WTC11 (cell line): ENCODE measurements at regions of chr12 and their contacts with region 1.

Region 1: GRCh38 chr12:6278439-6279255 is 31.8 kb upstream of the PLEKHG6 start:
- DNase-seq: peak; percentile 85
- ATAC-seq: peak; percentile 65
- H3K4me3 Mint-ChIP-seq: peak overlapping the region; percentile 76
- H3K27ac Mint-ChIP-seq: no peak overlapping the region
- H3K4me1 Mint-ChIP-seq: peaks cover 59% of the 10 kb centered on the region
- H3K27me3 Mint-ChIP-seq: peaks cover 5% of the 10 kb centered on the region
- CTCF ChIP-seq: peak; percentile 99

Region 2: DNA sequence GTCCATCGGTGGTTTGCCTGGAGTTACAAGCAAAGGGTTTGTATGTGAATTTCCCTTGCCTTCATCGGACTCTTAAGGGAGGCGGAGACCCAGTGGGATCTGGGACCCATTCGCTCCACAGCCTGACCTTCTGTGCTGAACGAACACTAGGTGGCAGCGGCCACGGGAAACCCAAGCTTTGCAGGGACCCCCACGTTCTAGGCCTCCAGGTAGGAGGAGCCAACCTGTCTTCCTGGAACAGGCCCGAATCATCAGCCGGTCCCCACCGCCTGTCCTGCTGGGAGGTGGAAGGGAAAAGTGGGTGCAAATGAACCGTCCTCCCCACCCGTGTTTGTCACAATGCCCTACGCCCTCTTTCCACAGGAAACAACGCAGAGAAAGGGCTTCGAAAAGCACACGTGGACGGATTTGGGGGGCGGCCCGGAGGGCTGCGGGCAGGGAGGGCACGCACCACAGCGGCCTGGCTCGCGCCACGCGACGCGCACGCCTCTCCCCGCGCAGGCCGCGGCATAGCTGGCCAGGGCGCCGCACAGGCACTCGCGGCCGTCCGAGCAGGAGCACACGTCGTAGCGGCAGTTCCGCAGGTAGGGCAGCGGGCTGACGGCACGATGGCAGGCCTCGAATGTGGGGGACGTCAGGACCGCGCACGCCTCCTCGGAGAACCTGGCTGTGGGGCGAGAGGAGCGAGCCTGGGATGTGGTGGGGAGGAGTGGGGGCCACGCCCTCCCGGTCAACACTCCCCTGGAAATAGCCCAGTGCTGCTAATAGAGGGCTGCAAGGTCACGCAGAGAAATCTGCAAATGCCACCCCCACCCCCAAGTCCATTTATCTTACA is 222.0 kb before region 1 on chr12:
- CTCF ChIA-PET with region 1: interaction called, 77 read pairs
- POLR2A ChIA-PET with region 1: no interaction called
- DNase-seq: peak; percentile 70
- ATAC-seq: peak; percentile 79
- H3K4me3 Mint-ChIP-seq: peak overlapping the region; percentile 59
- H3K27ac Mint-ChIP-seq: no peak overlapping the region
- H3K4me1 Mint-ChIP-seq: peaks cover 29% of the 10 kb centered on the region
- H3K27me3 Mint-ChIP-seq: peaks cover 6% of the 10 kb centered on the region
- CTCF ChIP-seq: no peak

Region 3: DNA sequence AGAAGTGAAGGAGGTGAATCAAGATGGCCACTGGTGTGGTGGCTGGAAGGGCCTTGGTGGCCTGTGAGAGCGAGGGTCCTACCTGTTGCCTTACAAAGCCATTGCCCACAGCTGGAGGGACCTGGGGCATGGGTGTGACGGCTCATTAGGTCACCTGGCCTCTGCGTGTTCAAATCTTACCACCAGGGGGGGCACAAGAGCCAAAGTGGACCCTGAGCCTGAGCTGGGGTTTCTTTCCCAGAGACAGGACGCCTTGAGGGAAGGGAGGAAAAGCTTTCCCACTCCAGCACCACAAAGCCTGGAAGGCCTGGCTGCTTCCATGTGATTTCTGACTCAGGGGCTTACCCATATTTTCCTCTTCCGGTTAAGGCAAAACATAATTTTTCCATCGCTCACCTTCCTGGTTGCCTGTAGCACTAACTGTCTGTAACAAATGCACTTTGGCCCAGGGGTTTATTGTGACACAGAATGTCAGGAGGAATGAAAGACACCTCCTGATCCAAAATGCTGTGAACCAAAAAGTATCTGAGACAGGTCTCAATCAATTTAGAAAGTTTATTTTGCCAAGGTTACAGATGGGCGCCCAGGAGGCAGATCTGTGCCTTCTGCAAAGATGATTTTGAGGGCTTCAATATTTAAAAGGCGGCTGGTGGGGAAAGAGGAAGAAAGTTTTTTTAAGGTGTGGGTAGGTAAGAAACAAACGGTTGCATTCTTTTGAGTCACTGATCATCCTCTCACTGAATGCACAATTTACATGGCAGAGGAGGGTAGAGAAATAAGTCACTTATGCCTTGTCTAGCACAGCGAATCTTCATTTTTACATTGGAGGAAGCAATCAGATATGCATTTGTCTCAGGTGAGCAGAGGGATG is 82.7 kb before region 1 on chr12:
- CTCF ChIA-PET with region 1: interaction called, 431 read pairs
- POLR2A ChIA-PET with region 1: interaction called, 3 read pairs
- DNase-seq: peak; percentile 95
- ATAC-seq: peak; percentile 60
- H3K4me3 Mint-ChIP-seq: no peak overlapping the region
- H3K27ac Mint-ChIP-seq: peak overlapping the region; percentile 79
- H3K4me1 Mint-ChIP-seq: peaks cover 63% of the 10 kb centered on the region
- H3K27me3 Mint-ChIP-seq: peaks cover 7% of the 10 kb centered on the region; the same call in 1 of the 2 replicates
- CTCF ChIP-seq: peak; percentile 99

Region 4: GRCh38 chr12:6222078-6222654 is 56.5 kb before region 1 on chr12:
- CTCF ChIA-PET with region 1: interaction called, 17 read pairs
- POLR2A ChIA-PET with region 1: no interaction called
- DNase-seq: no peak
- ATAC-seq: no peak
- H3K4me3 Mint-ChIP-seq: no peak overlapping the region
- H3K27ac Mint-ChIP-seq: peak overlapping the region; percentile 78
- H3K4me1 Mint-ChIP-seq: peaks cover 58% of the 10 kb centered on the region
- H3K27me3 Mint-ChIP-seq: no peaks in the 10 kb centered on the region
- CTCF ChIP-seq: no peak

Region 5: DNA sequence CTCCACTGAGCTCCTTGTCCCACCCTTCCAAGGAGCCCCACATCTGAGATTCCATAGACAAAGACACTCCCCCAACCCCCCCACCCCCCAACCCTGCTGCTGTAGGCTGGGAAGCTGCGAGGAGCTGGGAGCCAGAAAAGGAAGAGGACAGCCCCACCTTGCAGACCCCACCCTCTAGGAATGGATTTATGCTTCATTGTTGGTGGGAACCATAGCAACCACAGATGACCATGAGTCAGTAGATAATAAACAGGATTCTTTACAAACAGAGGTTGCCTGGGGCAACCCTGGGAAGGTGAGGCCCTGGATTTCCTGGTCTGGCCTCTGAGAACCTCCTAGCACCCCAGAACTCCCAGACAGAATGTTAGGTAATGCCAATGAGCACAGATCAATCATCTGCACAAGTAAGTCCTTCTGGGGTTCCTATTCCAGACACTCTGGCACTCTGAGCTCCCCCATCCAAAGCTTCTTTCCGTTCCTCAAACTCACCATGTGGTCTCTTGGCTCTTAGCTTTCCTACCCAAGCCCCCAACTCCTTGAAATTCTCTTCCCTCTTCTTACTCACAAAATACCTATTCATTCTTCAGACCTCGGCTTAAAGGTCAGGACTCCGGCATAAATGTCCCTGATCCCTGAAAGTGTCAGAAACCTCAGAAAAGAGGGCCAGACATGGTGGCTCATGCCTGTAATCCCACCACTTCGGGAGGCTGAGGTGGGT is 16.6 kb after region 1 on chr12:
- CTCF ChIA-PET with region 1: interaction called, 11 read pairs
- POLR2A ChIA-PET with region 1: no interaction called
- DNase-seq: no peak
- ATAC-seq: no peak
- H3K4me3 Mint-ChIP-seq: no peak overlapping the region
- H3K27ac Mint-ChIP-seq: no peak overlapping the region
- H3K4me1 Mint-ChIP-seq: peaks cover 19% of the 10 kb centered on the region
- H3K27me3 Mint-ChIP-seq: peaks cover 4% of the 10 kb centered on the region; the same call in 1 of the 2 replicates
- CTCF ChIP-seq: no peak

Region 6: DNA sequence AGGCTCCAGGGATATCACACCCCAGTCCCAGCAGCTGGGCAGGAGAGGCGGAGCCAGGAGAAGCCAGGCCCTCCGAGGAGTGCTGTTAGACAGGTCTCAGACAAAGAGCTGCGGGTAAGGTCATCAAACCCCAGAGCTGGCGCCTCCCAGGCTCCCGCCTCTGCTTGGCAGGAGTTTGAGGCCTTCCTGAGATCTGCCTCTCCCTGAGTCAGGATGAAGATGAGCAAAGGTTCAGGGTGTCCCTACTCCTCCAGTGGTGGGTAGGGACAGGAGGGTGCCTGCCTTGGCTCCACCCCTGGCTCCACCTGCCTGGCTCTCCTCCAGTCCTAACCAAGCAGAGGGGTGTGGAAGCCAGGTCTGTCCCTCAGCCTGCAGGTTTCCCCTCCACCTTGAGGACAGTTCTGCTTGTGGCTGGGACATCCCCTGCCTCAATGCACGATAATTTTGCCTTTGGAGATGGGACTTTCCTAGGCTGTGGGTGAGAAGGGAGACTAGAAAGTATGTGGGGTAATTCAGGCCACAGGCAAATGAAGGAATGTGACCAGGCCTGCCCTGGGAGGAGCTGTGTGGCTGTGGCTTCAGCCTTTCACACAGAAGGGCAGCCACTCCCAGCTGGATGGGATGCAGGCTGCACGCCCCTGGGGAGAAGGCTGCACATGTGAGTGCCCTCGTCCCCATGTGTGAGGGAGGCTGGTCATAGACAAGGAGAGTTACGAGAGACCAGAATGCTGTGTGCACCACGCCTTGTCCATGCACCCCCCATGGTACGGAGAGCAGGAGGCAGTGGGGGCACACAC is 34.1 kb after region 1 on chr12:
- CTCF ChIA-PET with region 1: interaction called, 13 read pairs
- POLR2A ChIA-PET with region 1: no interaction called
- DNase-seq: peak; percentile 68
- ATAC-seq: peak; percentile 56
- H3K4me3 Mint-ChIP-seq: no peak overlapping the region; the same call in 1 of the 2 replicates
- H3K27ac Mint-ChIP-seq: peak overlapping the region; percentile 87
- H3K4me1 Mint-ChIP-seq: peaks cover 29% of the 10 kb centered on the region
- H3K27me3 Mint-ChIP-seq: peaks cover 11% of the 10 kb centered on the region
- CTCF ChIP-seq: no peak

Region 7: GRCh38 chr12:6407236-6407954 is 128.7 kb after region 1 on chr12:
- CTCF ChIA-PET with region 1: no interaction called
- POLR2A ChIA-PET with region 1: no interaction called
- DNase-seq: no peak
- ATAC-seq: no peak
- H3K4me3 Mint-ChIP-seq: no peak overlapping the region
- H3K27ac Mint-ChIP-seq: 0 out of 2 replicates have a peak overlapping the region, but pooled peaks have one; percentile 5
- H3K4me1 Mint-ChIP-seq: no peaks in the 10 kb centered on the region
- H3K27me3 Mint-ChIP-seq: no peaks in the 10 kb centered on the region
- CTCF ChIP-seq: no peak